Mammary epithelial cell (primary cell): ENCODE measurements at regions of chr22 and their contacts with region 1.

Region 1: DNA sequence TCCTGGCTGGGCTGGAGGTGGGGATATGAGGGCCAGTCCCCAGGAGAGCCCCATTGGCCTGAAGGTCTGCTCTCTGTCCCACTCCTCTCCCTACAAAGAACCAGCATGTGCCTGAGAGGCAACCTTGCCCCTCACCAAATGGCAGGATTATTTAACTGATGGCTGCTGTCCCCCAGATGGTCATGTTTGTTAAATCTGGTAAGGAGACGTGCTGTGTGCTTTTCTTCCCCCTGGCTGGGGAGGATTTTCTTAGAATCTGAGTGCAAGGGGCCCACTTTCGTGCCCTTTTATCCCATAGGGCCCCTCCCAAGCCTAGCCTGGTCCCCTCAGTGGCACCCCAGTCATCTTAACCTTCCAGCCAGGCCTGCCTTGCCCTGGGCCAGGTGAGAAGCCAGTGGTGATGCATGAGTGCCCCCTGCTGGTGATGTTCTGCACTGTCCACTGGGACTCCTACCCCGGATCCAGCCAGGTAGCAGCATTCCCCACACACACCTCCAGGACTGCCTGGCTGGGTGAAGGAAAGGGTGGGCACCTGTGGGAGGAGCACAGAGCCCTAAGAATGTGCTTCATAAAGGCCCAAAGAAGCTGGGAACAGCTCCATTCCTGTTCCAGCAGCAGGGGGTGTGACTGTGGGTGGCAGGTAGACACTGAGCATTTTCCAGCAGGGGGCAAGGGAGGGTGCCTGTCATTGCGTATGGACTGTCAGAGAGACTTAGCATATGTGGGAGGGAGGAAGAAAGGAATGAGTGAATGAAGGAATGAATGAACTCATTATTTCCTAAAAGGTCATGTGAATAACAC is 28.9 kb downstream of the MFNG start:
- DNase-seq: peak; percentile 67
- H3K4me3 ChIP-seq: no peak overlapping the region
- H3K27ac ChIP-seq: no peak overlapping the region
- H3K4me1 ChIP-seq: peaks cover 21% of the 10 kb centered on the region
- H3K27me3 ChIP-seq: no peaks in the 10 kb centered on the region
- CTCF ChIP-seq: peak; percentile 97

Region 2: DNA sequence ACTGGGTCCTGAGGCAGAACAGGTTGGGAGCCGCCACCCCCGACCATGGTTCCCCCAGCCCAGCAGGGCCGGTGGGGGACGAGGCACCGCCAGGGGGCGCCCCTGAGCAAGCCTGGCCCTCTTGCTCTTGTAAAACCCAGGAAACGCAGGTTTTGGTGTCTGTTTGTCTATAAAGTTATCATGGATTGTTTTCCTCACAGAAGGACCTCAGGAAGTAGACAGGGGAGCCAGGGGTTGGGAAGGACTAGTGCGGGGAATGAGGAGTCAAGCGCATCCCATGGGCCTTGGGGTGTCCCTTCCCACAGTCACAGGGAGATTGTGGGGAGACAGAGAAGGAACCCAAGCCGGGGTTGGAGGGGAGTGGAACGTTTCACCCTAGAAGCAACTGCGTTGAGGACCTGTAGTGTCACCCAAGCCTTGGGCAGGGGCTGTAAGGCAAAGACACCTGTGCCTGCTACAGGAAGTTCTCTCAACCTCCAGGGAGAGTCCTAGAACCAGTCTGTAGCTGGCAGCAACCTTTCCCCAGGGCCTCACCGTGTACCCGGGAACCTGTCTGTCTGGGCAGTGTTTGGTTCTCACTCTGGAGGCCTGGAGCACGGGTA is 379.3 kb before region 1 on chr22:
- CTCF ChIA-PET with region 1: no interaction called
- dilution Hi-C with region 1: no loop called
- in situ Hi-C with region 1: no loop called
- intact Hi-C with region 1: loop called (anchors 1 kb)
- DNase-seq: peak; percentile 7
- H3K4me3 ChIP-seq: no peak overlapping the region
- H3K27ac ChIP-seq: no peak overlapping the region
- H3K4me1 ChIP-seq: no peaks in the 10 kb centered on the region
- H3K27me3 ChIP-seq: no peaks in the 10 kb centered on the region
- CTCF ChIP-seq: peak; percentile 91 to 100

Region 3: GRCh38 chr22:37199103-37199759 is 258.1 kb before region 1 on chr22:
- CTCF ChIA-PET with region 1: no interaction called
- dilution Hi-C with region 1: no loop called
- in situ Hi-C with region 1: no loop called
- intact Hi-C with region 1: loop called (anchors 1 kb)
- DNase-seq: peak; percentile 94
- H3K4me3 ChIP-seq: peak overlapping the region; percentile 70 to 87 (median 84)
- H3K27ac ChIP-seq: peak overlapping the region; percentile 65
- H3K4me1 ChIP-seq: peaks cover 35% of the 10 kb centered on the region
- H3K27me3 ChIP-seq: no peaks in the 10 kb centered on the region
- CTCF ChIP-seq: peak; percentile 68 to 87

Region 4: GRCh38 chr22:37316875-37317371 is 140.4 kb before region 1 on chr22:
- CTCF ChIA-PET with region 1: interaction called, 7 read pairs
- dilution Hi-C with region 1: no loop called
- in situ Hi-C with region 1: loop called (anchors 5 kb)
- intact Hi-C with region 1: loop called (anchors 1 kb)
- DNase-seq: peak; percentile 87
- H3K4me3 ChIP-seq: no peak overlapping the region
- H3K27ac ChIP-seq: no peak overlapping the region
- H3K4me1 ChIP-seq: peaks cover 48% of the 10 kb centered on the region
- H3K27me3 ChIP-seq: no peaks in the 10 kb centered on the region
- CTCF ChIP-seq: peak; percentile 97 to 99

Region 5: GRCh38 chr22:37428649-37429586 is 28.4 kb before region 1 on chr22:
- CTCF ChIA-PET with region 1: no interaction called
- dilution Hi-C with region 1: no loop called
- in situ Hi-C with region 1: no loop called
- intact Hi-C with region 1: loop called (anchors 1 kb)
- DNase-seq: no peak
- H3K4me3 ChIP-seq: no peak overlapping the region
- H3K27ac ChIP-seq: no peak overlapping the region
- H3K4me1 ChIP-seq: peaks cover 36% of the 10 kb centered on the region
- H3K27me3 ChIP-seq: no peaks in the 10 kb centered on the region
- CTCF ChIP-seq: peak; percentile 49 to 65